Right ventricle myocardium inferior (tissue), 1 donor: ENCODE measurements at regions of chr11 and their contacts with region 1.

Region 1: DNA sequence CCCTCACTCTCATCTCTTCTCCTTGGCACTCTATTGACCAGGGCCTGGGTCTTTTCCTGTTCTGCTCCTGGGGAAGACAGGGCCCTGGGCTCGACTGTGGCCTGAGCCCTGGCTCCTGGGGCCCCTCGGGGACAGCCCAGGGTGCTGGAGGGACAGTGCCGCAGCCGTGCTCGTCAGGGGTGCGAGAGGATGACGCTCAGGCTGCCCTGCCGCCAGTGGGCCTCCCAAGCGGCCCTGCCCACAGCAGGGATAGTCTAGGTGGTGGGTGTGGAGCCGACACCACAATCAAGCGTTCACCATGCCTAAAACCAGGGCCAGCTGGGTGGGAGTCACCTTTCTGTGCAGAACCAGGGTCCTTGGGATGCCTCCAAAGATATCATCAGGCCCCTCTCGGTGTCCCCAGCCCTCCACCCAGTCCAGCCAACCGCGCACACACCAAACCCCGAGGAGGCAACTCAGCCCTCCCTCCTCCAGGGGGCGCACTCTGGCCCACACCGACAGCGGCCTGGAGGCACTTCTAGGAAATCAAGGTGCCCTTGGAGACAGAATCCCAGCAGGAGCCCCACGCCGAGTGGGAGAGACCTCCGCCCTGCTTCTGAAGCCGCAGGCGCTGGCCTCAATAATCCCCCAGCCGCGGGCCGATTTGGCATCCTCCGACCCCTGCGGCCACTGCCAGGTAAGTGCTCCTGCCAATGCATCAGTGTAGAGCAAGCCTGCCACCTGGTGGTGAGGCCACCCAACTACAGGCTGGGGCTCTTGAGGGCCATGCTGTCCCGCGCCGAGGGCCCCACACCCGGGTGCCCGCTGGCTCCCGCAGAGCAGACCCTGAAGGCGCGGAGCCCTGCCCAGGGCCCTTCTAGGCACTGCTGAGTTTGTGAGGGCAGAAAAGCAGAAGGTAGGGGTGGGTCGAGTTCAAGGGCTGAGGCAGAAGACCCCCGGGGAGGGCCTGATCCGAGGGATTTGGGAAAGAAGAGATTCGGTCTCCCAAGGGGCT is 496.4 kb downstream of the BUD13 start:
- DNase-seq: peak; percentile 88
- ATAC-seq: peak; percentile 75

Region 2: GRCh38 chr11:115324581-115325432 is 951.5 kb before region 1 on chr11:
- intact Hi-C with region 1: loop called (anchors 2 kb)
- DNase-seq: no peak
- ATAC-seq: no peak

Region 3: GRCh38 chr11:115990004-115990447 is 286.3 kb before region 1 on chr11:
- intact Hi-C with region 1: loop called (anchors 5 kb)
- DNase-seq: no peak
- ATAC-seq: peak; percentile 67